ENCODE measurements at regions of chr16 and their contacts with region 1.

Region 1: GRCh38 chr16:48164907-48165726 is 9.3 kb upstream of the ABCC12 start:
- DNase-seq: peak; percentile 59
- H3K4me3 Mint-ChIP-seq: no peak overlapping the region
- H3K27ac Mint-ChIP-seq: peak overlapping the region; percentile 21
- H3K4me1 Mint-ChIP-seq: peaks cover 23% of the 10 kb centered on the region
- H3K27me3 Mint-ChIP-seq: peaks cover 6% of the 10 kb centered on the region

Region 2: GRCh38 chr16:46947900-46948547 is 1217.1 kb before region 1 on chr16:
- intact Hi-C with region 1: loop called (anchors 1 kb)
- DNase-seq: peak; percentile 19
- H3K4me3 Mint-ChIP-seq: no peak overlapping the region
- H3K27ac Mint-ChIP-seq: no peak overlapping the region
- H3K4me1 Mint-ChIP-seq: peaks cover 9% of the 10 kb centered on the region
- H3K27me3 Mint-ChIP-seq: peaks cover 2% of the 10 kb centered on the region

Region 3: GRCh38 chr16:47258874-47259461 is 906.1 kb before region 1 on chr16:
- intact Hi-C with region 1: loop called (anchors 5 kb)
- DNase-seq: no peak
- H3K4me3 Mint-ChIP-seq: no peak overlapping the region
- H3K27ac Mint-ChIP-seq: no peak overlapping the region
- H3K4me1 Mint-ChIP-seq: no peaks in the 10 kb centered on the region
- H3K27me3 Mint-ChIP-seq: no peaks in the 10 kb centered on the region

Region 4: DNA sequence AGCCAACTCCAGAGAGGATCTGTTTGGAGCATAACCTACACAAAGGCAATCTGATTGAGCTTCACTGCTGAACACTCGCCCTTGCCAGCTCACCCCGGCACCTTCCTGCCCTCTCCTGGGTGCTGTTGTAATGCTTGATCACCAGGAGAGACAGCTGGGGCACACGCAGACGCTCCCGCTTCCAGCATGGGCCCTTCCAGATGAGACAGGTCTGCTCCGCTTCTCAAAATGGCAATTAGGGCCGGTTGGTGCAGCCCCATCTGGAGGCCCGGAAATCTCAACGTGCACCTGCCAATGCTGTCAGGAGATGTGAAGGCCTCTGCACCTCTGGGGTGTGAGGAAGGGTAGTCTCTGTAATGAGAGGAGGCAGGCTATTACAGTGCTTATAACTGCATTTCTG is 215.4 kb before region 1 on chr16:
- intact Hi-C with region 1: no loop called
- DNase-seq: no peak
- H3K4me3 Mint-ChIP-seq: no peak overlapping the region
- H3K27ac Mint-ChIP-seq: no peak overlapping the region
- H3K4me1 Mint-ChIP-seq: no peaks in the 10 kb centered on the region
- H3K27me3 Mint-ChIP-seq: no peaks in the 10 kb centered on the region

Region 5: DNA sequence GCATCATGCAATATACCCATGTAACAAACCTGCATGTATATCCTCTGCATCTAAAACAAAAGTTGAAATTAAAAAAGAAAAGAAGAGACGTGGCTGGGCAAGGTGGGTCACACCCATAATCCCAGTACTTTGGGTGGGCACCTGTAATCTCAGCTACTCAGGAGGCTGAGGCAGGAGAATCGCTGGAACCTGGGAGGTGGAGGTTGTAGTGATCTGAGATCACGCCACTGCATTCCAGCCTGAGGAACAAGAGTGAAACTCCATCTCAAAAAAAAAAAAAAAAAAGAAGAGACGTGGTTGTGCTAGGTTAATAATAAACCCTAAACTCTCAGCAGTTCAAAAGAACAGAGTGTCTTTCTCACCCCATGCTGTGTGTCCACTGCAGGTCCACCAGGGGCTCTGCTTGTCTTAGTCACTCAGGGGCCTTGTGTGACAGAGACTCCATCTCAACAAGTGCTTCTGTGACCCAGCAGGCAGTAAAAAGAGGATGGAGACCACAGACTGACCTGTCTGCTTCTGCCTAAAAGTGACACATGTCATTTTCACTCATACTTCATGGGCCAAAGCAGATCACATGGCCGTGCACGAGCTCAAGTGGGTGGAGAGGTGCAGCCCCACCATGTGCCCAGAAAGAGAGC is 467.1 kb after region 1 on chr16:
- intact Hi-C with region 1: loop called (anchors 1 kb)
- DNase-seq: no peak
- H3K4me3 Mint-ChIP-seq: no peak overlapping the region
- H3K27ac Mint-ChIP-seq: no peak overlapping the region
- H3K4me1 Mint-ChIP-seq: peaks cover 11% of the 10 kb centered on the region
- H3K27me3 Mint-ChIP-seq: peaks cover 11% of the 10 kb centered on the region